ENCODE measurements at regions of chr1 and their contacts with region 1.

Region 1: GRCh38 chr1:201468844-201469511 is at the start of gene PHLDA3:
- DNase-seq: peak; percentile 71
- ATAC-seq: peak; percentile 85
- H3K4me3 Mint-ChIP-seq: peak within 1 kb of the TSS; percentile 76
- H3K27ac Mint-ChIP-seq: peak within 1 kb of the TSS; percentile 54
- H3K4me1 Mint-ChIP-seq: peaks cover 18% of the 10 kb centered on the region
- H3K27me3 Mint-ChIP-seq: peaks cover 39% of the 10 kb centered on the region
- total RNA-seq, gene PHLDA3: 12.9 to 23.5 TPM

Region 2: GRCh38 chr1:201376464-201377374 is 92.3 kb before region 1 on chr1:
- CTCF ChIA-PET with region 1: no interaction called
- DNase-seq: no peak
- ATAC-seq: peak; percentile 57
- H3K4me3 Mint-ChIP-seq: no peak overlapping the region
- H3K27ac Mint-ChIP-seq: no peak overlapping the region
- H3K4me1 Mint-ChIP-seq: no peaks in the 10 kb centered on the region
- H3K27me3 Mint-ChIP-seq: peaks cover 10% of the 10 kb centered on the region

Region 3: DNA sequence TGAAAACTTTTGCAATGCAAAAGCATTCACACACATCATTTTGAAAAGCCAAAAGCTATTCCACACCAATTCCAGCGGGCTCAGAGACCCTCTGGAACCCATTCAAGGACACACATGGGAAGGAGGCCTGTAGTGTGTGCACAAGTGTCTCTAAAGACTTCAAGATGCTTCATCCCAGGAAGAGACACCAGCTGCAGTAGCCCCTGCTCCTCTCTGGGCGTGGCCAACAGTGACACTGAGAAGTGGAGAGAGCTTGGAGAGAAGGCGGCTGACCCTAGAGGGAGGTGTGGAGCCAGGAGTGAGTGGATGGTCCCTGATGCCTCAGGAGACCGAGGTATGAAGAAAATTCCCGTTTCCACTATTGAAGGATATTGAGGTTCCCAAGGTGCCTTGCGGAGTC is 32.6 kb before region 1 on chr1:
- CTCF ChIA-PET with region 1: interaction called, 10 read pairs
- DNase-seq: no peak
- ATAC-seq: no peak
- H3K4me3 Mint-ChIP-seq: no peak overlapping the region
- H3K27ac Mint-ChIP-seq: no peak overlapping the region
- H3K4me1 Mint-ChIP-seq: peaks cover 5% of the 10 kb centered on the region
- H3K27me3 Mint-ChIP-seq: peaks cover 35% of the 10 kb centered on the region

Measured in activated CD8-positive, alpha-beta memory T cell treated with anti-CD3 and anti-CD28 coated beads, Interleukin-2, amount 10 ng/mL, durations not matched to agents 7 days and 5 days (primary cell).